ENCODE measurements at regions of chr10 and their contacts with region 1.

Region 1: DNA sequence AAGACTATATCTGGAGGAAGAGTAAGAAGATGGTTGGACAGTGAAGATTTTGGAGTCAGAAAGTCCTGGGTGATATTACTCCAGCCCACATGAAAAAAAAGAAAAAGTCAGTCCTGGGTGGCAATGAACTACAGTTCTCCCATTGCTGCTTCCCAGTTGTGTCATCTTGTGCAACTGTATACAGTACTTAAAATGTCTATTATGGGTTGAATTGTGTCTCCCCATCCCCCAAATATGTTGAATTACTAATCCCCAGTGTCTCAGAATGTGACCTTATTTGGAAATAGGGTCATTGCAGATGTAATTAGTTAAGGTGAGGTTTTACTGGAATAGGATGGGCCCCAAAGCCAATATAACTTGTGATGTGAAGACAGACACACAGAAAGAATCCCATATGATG is 15.6 kb downstream of the SEC23IP start:
- DNase-seq: no peak
- ATAC-seq: no peak
- H3K4me3 ChIP-seq: no peak overlapping the region
- H3K27ac ChIP-seq: no peak overlapping the region
- H3K4me1 ChIP-seq: no peaks in the 10 kb centered on the region
- H3K27me3 ChIP-seq: no peaks in the 10 kb centered on the region
- CTCF ChIP-seq: no peak
- POLR2A ChIP-seq: no peak
- RAD21 ChIP-seq: no peak

Region 2: DNA sequence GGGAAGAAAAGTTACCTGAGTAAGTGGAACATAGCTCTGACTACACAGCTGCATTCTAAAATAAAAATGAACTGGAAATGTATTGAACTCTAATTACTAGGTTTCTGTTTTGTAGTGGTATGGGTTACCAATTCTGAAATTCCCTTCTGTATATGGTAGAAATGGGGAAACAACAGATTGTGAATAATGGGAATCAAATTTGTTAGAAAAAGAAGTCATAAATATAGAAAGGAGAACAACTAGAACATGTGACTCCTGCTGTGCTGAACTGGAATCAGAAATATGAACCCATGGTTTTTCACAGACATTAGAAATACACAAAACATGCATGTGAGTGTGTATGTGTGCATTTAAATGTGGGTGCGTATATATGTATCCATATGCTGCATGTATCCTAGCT is 62.5 kb before region 1 on chr10:
- CTCF ChIA-PET with region 1: no interaction called
- POLR2A ChIA-PET with region 1: interaction called, 5 read pairs
- RAD21 ChIA-PET with region 1: no interaction called
- intact Hi-C with region 1: loop called (anchors 1 kb)
- DNase-seq: no peak
- ATAC-seq: no peak
- H3K4me3 ChIP-seq: no peak overlapping the region
- H3K27ac ChIP-seq: no peak overlapping the region
- H3K4me1 ChIP-seq: 0 out of 4 replicates have a peak, but pooled peaks cover 0 to 6% of the 10 kb centered on the region in 2 experiments
- H3K27me3 ChIP-seq: no peaks in the 10 kb centered on the region
- CTCF ChIP-seq: no peak
- POLR2A ChIP-seq: no peak
- RAD21 ChIP-seq: no peak

Region 3: GRCh38 chr10:120805014-120805812 is 897.0 kb after region 1 on chr10:
- CTCF ChIA-PET with region 1: no interaction called
- POLR2A ChIA-PET with region 1: no interaction called
- RAD21 ChIA-PET with region 1: no interaction called
- intact Hi-C with region 1: no loop called
- DNase-seq: peak; percentile 4
- ATAC-seq: peak; percentile 64
- H3K4me3 ChIP-seq: no peak overlapping the region
- H3K27ac ChIP-seq: no peak overlapping the region
- H3K4me1 ChIP-seq: no peaks in the 10 kb centered on the region
- H3K27me3 ChIP-seq: peaks cover 66% of the 10 kb centered on the region
- CTCF ChIP-seq: peak in 2 of 3 experiments; percentile 38 to 57; a peak in 4 of 6 replicates
- POLR2A ChIP-seq: no peak
- RAD21 ChIP-seq: no peak

Measured in HCT116 (cell line).